Activated naive CD8-positive, alpha-beta T cell treated with anti-CD3 and anti-CD28 coated beads, Interleukin-2, amount 10 ng/mL, durations not matched to agents 7 days and 5 days (primary cell): ENCODE measurements at regions of chr10 and their contacts with region 1.

Region 1: DNA sequence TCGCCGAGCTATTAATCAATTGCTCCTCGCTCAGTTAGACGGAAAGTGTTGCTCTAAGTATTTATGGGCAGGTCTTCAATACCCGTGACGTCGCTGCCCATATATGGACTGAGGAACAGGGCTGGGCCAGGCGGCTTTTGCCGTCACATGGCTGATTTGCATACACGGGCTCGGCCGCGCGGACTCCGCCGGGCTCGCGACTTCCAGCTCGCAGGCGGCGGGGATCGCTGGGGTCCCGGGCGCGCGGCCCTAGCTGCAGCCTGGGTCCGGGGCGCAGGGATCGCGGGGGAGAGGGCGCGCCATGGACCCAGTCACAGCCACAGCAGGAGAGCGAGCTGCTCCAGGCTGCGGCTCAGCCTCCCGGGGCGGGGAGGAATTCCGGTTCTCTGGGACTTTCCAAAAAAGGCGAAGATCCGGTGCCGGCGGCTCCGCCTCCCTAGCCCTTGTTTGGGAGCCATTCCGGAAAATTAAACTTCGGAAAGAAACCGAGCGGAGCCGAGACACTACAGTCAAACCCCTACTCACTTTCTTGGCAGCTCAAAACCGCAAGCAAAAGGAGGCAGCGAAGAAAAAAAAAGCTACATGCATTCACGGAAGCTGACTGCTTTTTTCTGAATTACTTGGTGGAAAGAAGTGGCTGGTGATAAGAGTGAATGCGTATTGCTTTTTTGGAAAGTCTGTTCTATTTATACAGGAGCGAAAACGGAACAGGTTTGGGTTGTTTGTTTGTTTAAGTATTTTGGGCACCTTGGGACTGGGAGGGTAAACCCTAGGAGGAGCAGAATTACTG is at the start of gene EGR2:
- DNase-seq: peak; percentile 93
- ATAC-seq: peak; percentile 82
- H3K4me3 Mint-ChIP-seq: peak within 1 kb of the TSS; percentile 92
- H3K27ac Mint-ChIP-seq: peak within 1 kb of the TSS; percentile 97
- H3K4me1 Mint-ChIP-seq: peaks cover 27% of the 10 kb centered on the region
- H3K27me3 Mint-ChIP-seq: peaks cover 50% of the 10 kb centered on the region
- total RNA-seq, gene EGR2: 1.4 to 2.2 TPM

Region 2: DNA sequence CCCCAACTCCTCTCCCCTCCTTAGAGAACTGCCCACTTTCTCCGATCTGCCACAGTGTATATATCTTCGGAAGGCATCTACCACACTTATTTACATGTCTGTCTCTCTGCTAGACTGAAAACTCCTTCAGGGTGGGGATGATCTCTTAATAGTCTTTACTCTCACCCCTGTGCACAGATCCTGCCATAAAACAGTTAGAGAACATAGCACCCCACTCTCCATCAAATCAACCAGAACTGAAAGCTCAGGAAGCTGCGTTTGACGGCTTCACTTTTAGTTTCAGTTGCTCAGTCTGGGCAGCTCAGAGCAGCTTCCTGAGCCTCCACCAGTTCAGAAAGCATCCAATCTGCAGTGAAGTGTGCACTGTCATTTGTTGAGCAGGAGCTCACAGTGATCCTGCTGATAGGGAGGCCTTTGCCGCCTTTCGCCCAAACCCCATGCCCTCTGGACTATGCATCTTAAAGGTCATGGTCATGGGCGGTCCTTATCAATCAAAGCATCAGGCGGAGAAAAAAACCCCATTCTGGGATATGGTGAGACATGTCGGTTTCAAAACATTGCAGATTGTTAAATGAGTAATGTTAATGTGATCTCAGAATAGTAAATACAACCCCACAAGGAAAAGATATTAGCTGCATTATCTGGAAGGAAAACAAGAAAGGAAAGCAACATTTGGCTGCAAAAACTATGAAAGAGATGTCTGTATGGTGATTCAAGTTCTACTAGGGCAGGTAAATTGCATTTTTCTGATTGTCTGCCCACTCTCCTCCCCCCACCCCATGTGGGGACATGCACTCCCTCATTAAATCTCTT is 179.1 kb before region 1 on chr10:
- POLR2A ChIA-PET with region 1: interaction called, 60 read pairs
- DNase-seq: peak; percentile 64
- ATAC-seq: peak; percentile 93
- H3K4me3 Mint-ChIP-seq: no peak overlapping the region
- H3K27ac Mint-ChIP-seq: no peak overlapping the region
- H3K4me1 Mint-ChIP-seq: peaks cover 1% of the 10 kb centered on the region
- H3K27me3 Mint-ChIP-seq: no peaks in the 10 kb centered on the region

Region 3: GRCh38 chr10:62653254-62653653 is 163.3 kb before region 1 on chr10:
- POLR2A ChIA-PET with region 1: no interaction called
- DNase-seq: no peak
- ATAC-seq: no peak
- H3K4me3 Mint-ChIP-seq: no peak overlapping the region
- H3K27ac Mint-ChIP-seq: no peak overlapping the region
- H3K4me1 Mint-ChIP-seq: peaks cover 7% of the 10 kb centered on the region
- H3K27me3 Mint-ChIP-seq: no peaks in the 10 kb centered on the region

Region 4: DNA sequence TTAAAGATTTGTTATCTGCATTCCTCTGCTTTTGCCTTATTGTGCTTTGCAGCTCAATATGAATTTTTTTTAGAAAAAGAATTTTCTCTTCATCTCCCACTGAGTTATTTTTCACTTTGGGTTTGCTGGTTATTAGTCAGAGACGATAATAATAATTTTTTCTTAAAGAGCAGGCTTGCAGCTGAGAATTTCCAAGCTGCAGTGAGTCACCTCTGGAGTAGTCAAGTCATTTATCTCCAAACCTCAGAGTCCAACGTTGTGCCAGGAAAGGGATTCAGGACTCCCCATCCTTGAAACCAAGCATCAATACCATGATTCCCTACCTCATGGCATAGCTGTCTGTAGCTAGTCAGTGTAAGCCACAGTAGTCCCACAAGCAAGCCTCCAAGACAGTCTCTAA is 14.8 kb after region 1 on chr10:
- POLR2A ChIA-PET with region 1: no interaction called
- DNase-seq: no peak
- ATAC-seq: no peak
- H3K4me3 Mint-ChIP-seq: no peak overlapping the region
- H3K27ac Mint-ChIP-seq: no peak overlapping the region
- H3K4me1 Mint-ChIP-seq: no peaks in the 10 kb centered on the region
- H3K27me3 Mint-ChIP-seq: peaks cover 15% of the 10 kb centered on the region

Region 5: DNA sequence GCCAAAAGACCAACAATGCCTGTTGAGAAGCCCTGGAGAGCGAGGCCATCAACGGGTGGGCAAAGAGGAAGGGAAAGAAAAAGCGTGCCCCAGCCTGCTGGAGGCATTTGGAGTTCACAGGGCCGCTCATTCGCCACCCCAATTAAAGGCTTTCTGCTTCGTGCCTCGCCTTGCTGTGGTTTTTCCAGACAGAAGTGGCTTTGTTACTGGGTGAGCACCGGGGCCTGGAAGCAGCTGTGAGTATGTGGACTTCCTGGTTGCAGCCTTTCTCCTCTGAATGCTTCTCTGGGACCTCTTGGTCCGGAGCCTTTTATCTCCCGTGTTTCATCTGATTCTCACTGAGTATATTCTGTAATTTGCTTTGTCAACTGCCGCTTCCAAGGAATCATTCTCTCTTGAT is 117.7 kb after region 1 on chr10:
- POLR2A ChIA-PET with region 1: no interaction called
- DNase-seq: no peak
- ATAC-seq: no peak
- H3K4me3 Mint-ChIP-seq: no peak overlapping the region
- H3K27ac Mint-ChIP-seq: no peak overlapping the region
- H3K4me1 Mint-ChIP-seq: no peaks in the 10 kb centered on the region
- H3K27me3 Mint-ChIP-seq: peaks cover 24% of the 10 kb centered on the region